ENCODE measurements at regions of chr1 and their contacts with region 1.

Region 1: GRCh38 chr1:186082235-186082937 is 292.7 kb downstream of the TPR start:
- DNase-seq: peak; percentile 93
- H3K4me3 ChIP-seq: no peak overlapping the region
- H3K27ac ChIP-seq: no peak overlapping the region
- H3K4me1 ChIP-seq: peaks cover 0 to 8% (median 7%) of the 10 kb centered on the region in 4 donors
- H3K27me3 ChIP-seq: no peaks in the 10 kb centered on the region
- CTCF ChIP-seq: no peak
- EP300 ChIP-seq: no peak
- POLR2A ChIP-seq: no peak

Region 2: DNA sequence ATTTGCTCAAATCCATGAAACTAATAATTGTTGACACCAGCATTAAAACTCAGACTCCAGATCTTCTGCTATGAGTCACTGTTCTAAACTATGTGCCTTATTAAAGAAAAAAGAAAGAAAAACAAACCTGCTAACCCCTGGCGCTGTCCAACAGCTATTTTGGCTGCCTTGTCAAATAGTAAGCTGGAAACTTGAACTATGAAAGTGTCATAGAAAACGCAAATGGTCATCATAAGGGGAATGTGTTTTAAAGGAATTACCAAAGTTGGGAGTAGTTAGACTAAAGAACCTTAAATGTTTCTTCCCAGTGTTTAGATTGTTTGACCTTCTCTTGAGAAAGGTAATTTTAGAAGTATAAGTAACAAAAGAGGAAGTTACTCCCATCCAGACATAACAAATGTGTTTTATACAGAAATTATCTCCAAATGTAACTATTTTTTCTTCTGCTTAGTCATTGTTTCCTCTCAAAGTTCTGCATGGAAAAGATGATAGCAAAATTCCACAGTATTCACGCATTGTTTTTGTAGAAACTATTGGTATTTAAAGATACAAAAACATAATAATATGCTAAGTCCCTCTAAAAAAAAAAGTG is 20.3 kb after region 1 on chr1:
- intact Hi-C with region 1: loop called (anchors 2 kb)
- DNase-seq: no peak
- H3K4me3 ChIP-seq: no peak overlapping the region
- H3K27ac ChIP-seq: peak overlapping the region; percentile 42 to 69 (median 60)
- H3K4me1 ChIP-seq: peaks cover 8 to 25% (median 17%) of the 10 kb centered on the region in 4 donors
- H3K27me3 ChIP-seq: no peaks in the 10 kb centered on the region
- CTCF ChIP-seq: no peak
- EP300 ChIP-seq: no peak
- POLR2A ChIP-seq: no peak

Measured in esophagus muscularis mucosa (tissue), 4 donors.